ENCODE measurements at regions of chr12 and their contacts with region 1.

Region 1: DNA sequence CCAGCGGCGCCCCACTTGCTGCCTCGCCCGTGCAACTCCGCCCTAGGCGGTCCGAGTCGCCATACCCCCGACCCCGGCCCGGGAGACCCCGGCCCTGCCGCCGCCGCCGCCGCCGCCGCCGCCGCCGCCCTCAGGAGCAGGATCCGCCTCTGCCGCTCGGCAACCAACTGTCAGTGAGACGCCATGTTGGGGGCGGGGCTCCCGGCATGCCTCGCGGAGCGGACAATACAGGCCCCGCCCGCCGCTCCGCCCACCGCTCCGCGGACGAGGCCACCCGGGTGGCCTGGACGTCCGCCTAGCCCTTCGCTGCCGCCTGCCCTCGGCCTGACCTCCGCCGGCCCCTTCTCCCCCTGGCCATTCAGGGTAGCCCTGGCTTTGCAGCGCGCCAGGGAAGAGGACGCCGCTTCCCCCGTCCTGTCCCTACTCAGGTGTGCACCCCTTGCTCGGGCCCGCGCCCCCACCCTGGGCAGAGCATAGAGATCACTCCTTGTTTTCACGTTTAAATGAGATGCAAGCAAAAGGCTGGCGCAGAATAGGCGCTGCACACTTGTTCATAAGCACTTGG is at the start of gene HECTD4:
- DNase-seq: peak; percentile 95
- H3K4me3 Mint-ChIP-seq: peak within 1 kb of the TSS; percentile 96
- H3K27ac Mint-ChIP-seq: peak within 1 kb of the TSS; percentile 80
- H3K4me1 Mint-ChIP-seq: peaks cover 27% of the 10 kb centered on the region
- H3K27me3 Mint-ChIP-seq: no peaks in the 10 kb centered on the region
- total RNA-seq, gene HECTD4: 17.6 to 19.2 TPM

Region 2: GRCh38 chr12:111819191-111820150 is 562.8 kb before region 1 on chr12:
- CTCF ChIA-PET with region 1: no interaction called
- intact Hi-C with region 1: loop called (anchors 5 kb)
- DNase-seq: no peak
- H3K4me3 Mint-ChIP-seq: no peak overlapping the region
- H3K27ac Mint-ChIP-seq: no peak overlapping the region
- H3K4me1 Mint-ChIP-seq: no peaks in the 10 kb centered on the region
- H3K27me3 Mint-ChIP-seq: peaks cover 9% of the 10 kb centered on the region

Region 3: GRCh38 chr12:111870706-111871105 is 511.6 kb before region 1 on chr12:
- CTCF ChIA-PET with region 1: no interaction called
- intact Hi-C with region 1: no loop called
- DNase-seq: no peak
- H3K4me3 Mint-ChIP-seq: no peak overlapping the region
- H3K27ac Mint-ChIP-seq: no peak overlapping the region
- H3K4me1 Mint-ChIP-seq: peaks cover 3% of the 10 kb centered on the region
- H3K27me3 Mint-ChIP-seq: no peaks in the 10 kb centered on the region

Region 4: DNA sequence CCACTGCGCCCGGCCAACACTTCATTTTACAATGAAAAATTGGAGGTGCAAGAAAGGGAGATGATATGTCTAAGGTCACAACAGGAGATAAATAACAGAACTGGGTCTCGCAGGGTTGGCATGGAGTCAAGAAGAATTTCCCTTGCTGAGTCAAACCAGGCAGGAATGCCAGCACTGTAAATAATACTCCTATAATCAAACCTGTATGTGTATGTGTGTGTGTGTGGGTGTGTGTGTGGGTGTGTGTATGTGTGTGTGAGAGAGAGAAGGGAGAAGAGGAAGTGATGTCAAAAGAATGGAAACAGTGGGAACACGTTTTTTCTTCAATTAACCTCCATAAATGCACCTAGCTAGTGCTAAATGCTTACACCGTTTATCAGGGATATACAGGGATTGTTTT is 439.8 kb before region 1 on chr12:
- CTCF ChIA-PET with region 1: interaction called, 8 read pairs
- intact Hi-C with region 1: loop called (anchors 1 kb)
- DNase-seq: no peak
- H3K4me3 Mint-ChIP-seq: no peak overlapping the region
- H3K27ac Mint-ChIP-seq: no peak overlapping the region
- H3K4me1 Mint-ChIP-seq: peaks cover 12% of the 10 kb centered on the region
- H3K27me3 Mint-ChIP-seq: no peaks in the 10 kb centered on the region

Region 5: DNA sequence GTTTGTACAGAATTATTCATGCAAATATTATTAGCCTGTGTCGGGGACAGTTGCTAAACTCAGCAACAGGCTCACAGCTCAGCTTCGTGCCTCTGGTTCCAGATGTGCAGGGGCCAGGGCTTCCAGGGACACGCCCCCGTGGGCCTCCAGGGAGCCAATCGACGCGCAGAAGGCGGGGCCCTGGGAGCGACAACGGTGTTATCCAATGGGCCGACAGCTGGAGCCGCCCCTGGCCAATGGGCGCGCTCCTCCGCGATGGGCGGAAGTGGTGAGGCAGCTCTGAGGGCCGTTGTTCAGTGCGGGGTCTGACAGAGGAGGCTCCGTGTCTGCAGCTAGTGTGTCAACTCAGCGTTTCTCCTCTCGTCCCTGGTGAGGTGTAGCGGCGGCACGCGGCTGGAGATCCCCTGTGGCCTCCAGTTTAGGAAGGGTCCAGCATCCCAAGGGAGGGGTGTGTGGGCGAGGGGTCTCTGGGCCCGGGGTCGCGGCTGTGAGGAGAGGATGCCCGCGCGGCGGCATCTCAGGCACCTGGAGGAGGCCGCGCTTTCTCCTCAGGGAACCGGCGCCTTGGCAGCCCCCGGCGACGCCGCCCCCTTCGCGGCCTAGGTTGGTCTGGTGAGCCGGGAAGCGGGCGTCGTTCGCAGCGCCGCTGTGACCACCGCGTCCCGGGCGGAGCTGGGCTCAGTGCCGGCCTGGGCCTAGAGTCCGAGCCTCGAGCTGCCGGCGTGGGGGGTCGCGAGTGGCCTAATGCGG is 256.9 kb before region 1 on chr12 and contains the start of gene TRAFD1:
- CTCF ChIA-PET with region 1: interaction called, 3 read pairs
- intact Hi-C with region 1: loop called (anchors 2 kb)
- DNase-seq: peak; percentile 98
- H3K4me3 Mint-ChIP-seq: peak within 1 kb of the TSS; percentile 72
- H3K27ac Mint-ChIP-seq: peak within 1 kb of the TSS; percentile 75
- H3K4me1 Mint-ChIP-seq: peaks cover 42% of the 10 kb centered on the region
- H3K27me3 Mint-ChIP-seq: no peaks in the 10 kb centered on the region
- total RNA-seq, gene TRAFD1: 49.6 to 55.7 TPM

Region 6: DNA sequence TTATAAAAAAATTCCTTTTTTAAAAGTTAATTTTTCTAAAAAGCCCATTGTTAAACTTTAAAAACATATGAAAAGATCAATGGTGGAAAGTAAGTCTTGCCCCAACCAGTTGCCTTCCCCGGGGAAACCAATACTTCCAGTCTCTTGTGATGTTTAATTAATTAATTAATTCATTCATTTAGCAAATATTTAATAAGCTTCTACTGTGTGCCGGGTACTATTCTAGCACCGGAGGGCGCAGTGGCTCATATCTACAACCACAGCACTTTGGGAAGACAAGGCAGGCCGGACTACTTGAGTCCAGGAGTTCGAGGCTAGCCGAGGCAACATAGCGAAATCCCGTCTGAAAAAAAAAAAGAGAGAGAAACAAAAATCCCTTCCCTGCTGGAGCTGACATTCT is 87.5 kb before region 1 on chr12:
- CTCF ChIA-PET with region 1: no interaction called
- intact Hi-C with region 1: loop called (anchors 2 kb)
- DNase-seq: no peak
- H3K4me3 Mint-ChIP-seq: no peak overlapping the region
- H3K27ac Mint-ChIP-seq: no peak overlapping the region
- H3K4me1 Mint-ChIP-seq: no peaks in the 10 kb centered on the region
- H3K27me3 Mint-ChIP-seq: no peaks in the 10 kb centered on the region

Region 7: GRCh38 chr12:112473056-112473455 is 90.7 kb after region 1 on chr12:
- CTCF ChIA-PET with region 1: no interaction called
- intact Hi-C with region 1: no loop called
- DNase-seq: no peak
- H3K4me3 Mint-ChIP-seq: no peak overlapping the region
- H3K27ac Mint-ChIP-seq: no peak overlapping the region
- H3K4me1 Mint-ChIP-seq: no peaks in the 10 kb centered on the region
- H3K27me3 Mint-ChIP-seq: no peaks in the 10 kb centered on the region

Measured in activated naive CD4-positive, alpha-beta T cell treated with anti-CD3 and anti-CD28 coated beads for 36 hours (primary cell).